CD8-positive, alpha-beta T cell (primary cell): ENCODE measurements at regions of chr4 and their contacts with region 1.

Region 1: GRCh38 chr4:80365928-80366327 is 30.4 kb downstream of the CFAP299 start:
- DNase-seq: peak; percentile 27 to 78 (median 56)
- ATAC-seq: peak; percentile 81
- H3K4me3 ChIP-seq: no peak overlapping the region
- H3K4me3 Mint-ChIP-seq: no peak overlapping the region
- H3K27ac ChIP-seq: no peak overlapping the region
- H3K27ac Mint-ChIP-seq: no peak overlapping the region
- H3K4me1 ChIP-seq: no peaks in the 10 kb centered on the region
- H3K4me1 Mint-ChIP-seq: peaks cover 7% of the 10 kb centered on the region
- H3K27me3 ChIP-seq: no peaks in the 10 kb centered on the region
- H3K27me3 Mint-ChIP-seq: peaks cover 1% of the 10 kb centered on the region
- CTCF ChIP-seq: peak; percentile 75

Region 2: GRCh38 chr4:78951862-78952472 is 1414.0 kb before region 1 on chr4:
- CTCF ChIA-PET with region 1: interaction called, 5 read pairs
- POLR2A ChIA-PET with region 1: no interaction called
- intact Hi-C with region 1: loop called in 1 of 2 experiments (anchors 5 kb)
- DNase-seq: peak in 4 of 9 experiments; percentile 23 to 64 (median 42)
- ATAC-seq: peak; percentile 59
- H3K4me3 ChIP-seq: no peak overlapping the region
- H3K4me3 Mint-ChIP-seq: no peak overlapping the region
- H3K27ac ChIP-seq: no peak overlapping the region
- H3K27ac Mint-ChIP-seq: no peak overlapping the region
- H3K4me1 ChIP-seq: no peaks in the 10 kb centered on the region
- H3K4me1 Mint-ChIP-seq: no peaks in the 10 kb centered on the region
- H3K27me3 ChIP-seq: no peaks in the 10 kb centered on the region
- H3K27me3 Mint-ChIP-seq: peaks cover 13% of the 10 kb centered on the region
- CTCF ChIP-seq: peak; percentile 88

Region 3: GRCh38 chr4:80540785-80541469 is 175.0 kb after region 1 on chr4:
- CTCF ChIA-PET with region 1: interaction called, 6 read pairs
- POLR2A ChIA-PET with region 1: no interaction called
- intact Hi-C with region 1: loop called in 1 of 2 experiments (anchors 5 kb)
- DNase-seq: peak in 2 of 9 experiments; percentile 18 to 39
- ATAC-seq: peak; percentile 48
- H3K4me3 ChIP-seq: no peak overlapping the region
- H3K4me3 Mint-ChIP-seq: no peak overlapping the region
- H3K27ac ChIP-seq: no peak overlapping the region
- H3K27ac Mint-ChIP-seq: no peak overlapping the region
- H3K4me1 ChIP-seq: peaks cover 12% of the 10 kb centered on the region
- H3K4me1 Mint-ChIP-seq: peaks cover 20% of the 10 kb centered on the region
- H3K27me3 ChIP-seq: no peaks in the 10 kb centered on the region
- H3K27me3 Mint-ChIP-seq: peaks cover 2% of the 10 kb centered on the region
- CTCF ChIP-seq: no peak

Region 4: DNA sequence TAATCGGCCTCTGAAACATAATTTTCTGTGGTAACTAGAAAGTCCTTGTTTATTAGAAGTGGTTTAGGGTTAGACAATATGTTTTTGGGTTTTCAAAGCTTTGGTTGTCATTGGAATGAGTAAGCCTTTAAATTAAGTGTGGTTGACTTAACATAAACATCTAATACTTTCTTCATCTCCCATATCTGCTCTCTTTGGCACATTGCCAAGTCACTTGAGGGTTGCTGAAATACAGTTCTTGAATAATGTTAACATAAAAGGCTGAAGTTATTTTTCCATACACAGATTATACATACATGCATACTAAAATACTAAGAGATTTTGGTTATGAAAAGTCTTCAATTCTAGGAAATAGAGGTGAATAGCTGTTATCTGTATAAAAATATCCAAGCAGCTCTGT is 422.9 kb after region 1 on chr4:
- CTCF ChIA-PET with region 1: no interaction called
- POLR2A ChIA-PET with region 1: no interaction called
- intact Hi-C with region 1: loop called in 1 of 2 experiments (anchors 10 kb)
- DNase-seq: peak in 2 of 9 experiments; percentile 7 to 10
- ATAC-seq: no peak
- H3K4me3 ChIP-seq: no peak overlapping the region
- H3K4me3 Mint-ChIP-seq: no peak overlapping the region
- H3K27ac ChIP-seq: no peak overlapping the region
- H3K27ac Mint-ChIP-seq: no peak overlapping the region
- H3K4me1 ChIP-seq: peaks cover 4% of the 10 kb centered on the region
- H3K4me1 Mint-ChIP-seq: peaks cover 9% of the 10 kb centered on the region
- H3K27me3 ChIP-seq: no peaks in the 10 kb centered on the region
- H3K27me3 Mint-ChIP-seq: no peaks in the 10 kb centered on the region
- CTCF ChIP-seq: no peak

Region 5: DNA sequence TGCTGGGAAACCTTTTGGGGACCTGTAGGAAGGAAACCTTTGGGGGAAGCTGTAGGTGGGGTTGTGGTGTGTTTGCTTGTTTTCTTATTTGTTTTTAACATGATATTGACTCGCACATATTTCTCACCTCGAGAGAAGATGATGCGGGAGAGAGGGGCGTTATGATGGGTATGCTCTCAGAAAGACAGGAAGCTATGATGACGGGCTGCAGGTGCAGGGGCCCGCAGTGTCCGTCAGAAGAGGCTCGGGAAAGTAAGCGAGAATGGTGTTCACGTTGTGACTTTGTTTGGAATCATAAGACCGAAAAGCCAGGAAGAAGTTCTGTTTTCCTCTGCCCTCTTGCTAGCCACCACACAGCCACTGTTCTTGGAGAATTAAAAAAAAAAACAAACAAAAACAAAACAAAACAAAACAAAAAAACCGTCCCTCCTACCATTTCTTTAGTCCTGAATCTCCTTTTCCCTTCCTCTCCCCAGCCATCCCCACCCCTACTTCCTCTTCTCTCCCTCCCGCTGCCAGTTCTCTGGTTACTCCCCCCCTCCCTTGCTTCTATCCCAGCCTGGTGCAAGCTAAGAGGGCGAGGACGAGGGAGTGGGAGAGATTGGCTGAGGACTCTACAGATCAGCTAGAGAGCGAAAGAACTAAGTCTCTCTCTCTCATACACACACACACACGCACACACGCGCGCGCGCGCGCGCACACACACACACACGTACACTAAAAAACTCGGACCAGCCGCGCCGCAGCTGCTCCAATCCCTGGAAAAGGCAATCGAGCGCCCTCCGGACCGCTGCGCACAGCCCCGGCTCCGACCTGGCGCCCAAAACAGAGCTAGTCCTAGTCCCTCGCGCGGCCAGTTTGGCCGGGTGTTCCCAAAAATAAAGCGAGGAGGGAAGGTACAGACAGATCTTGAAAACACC is 664.4 kb after region 1 on chr4 and contains the start of gene BMP3:
- CTCF ChIA-PET with region 1: interaction called, 12 read pairs
- POLR2A ChIA-PET with region 1: no interaction called
- intact Hi-C with region 1: no loop called
- DNase-seq: peak in 1 of 9 experiments; percentile 2
- ATAC-seq: no peak
- H3K4me3 ChIP-seq: peak within 1 kb of the TSS in 1 of 2 experiments; percentile 42
- H3K4me3 Mint-ChIP-seq: peak within 1 kb of the TSS; percentile 77
- H3K27ac ChIP-seq: no peak within 1 kb of the TSS
- H3K27ac Mint-ChIP-seq: no peak within 1 kb of the TSS
- H3K4me1 ChIP-seq: peaks cover 15% of the 10 kb centered on the region
- H3K4me1 Mint-ChIP-seq: peaks cover 14% of the 10 kb centered on the region
- H3K27me3 ChIP-seq: peaks cover 20 to 24% of the 10 kb centered on the region in 2 experiments
- H3K27me3 Mint-ChIP-seq: peaks cover 62% of the 10 kb centered on the region
- CTCF ChIP-seq: no peak
- total RNA-seq, gene BMP3: not detected

Region 6: DNA sequence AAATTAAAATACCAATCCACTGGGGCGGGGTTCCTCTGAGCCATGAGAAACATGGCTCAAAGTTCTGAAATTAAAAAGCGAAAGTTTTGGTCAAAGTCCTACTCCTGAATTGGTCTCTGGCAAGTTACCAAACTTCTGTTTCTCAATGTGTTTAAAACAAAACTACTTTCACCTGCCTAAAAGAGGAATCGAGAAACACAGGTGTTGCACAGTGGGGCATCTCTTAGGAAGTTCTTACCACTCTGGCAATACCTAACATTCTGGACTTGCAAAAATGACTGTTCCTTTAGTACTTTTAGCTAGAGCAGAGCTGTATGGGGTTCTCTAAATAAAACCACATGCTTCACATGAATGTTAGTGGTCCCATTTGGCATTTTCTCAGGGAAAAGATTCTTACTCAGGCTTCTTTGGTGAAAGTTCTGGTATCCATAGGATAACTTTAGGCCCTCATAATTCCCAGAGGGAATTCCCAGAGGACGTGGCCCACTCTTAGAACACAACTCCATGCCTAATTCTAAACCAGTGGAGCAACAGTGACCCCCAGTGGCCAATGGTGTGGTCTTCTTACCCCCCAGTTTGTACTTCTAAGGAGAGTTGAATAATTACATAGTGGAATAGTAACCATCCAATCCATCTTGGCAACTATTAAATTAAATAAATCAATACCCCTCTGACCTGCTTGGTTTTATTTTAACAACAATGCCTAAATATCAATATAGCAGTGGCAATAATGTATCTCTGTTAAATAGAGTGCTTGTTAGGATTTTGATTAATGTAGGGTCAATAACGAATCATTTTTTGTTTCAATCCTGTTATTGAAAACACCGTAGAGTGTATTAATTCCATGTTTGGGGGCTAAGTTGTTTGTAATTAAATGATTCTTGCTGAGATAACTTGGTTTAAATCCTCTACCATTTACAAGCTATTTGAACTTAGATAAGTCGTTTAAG is 686.5 kb after region 1 on chr4:
- CTCF ChIA-PET with region 1: interaction called, 10 read pairs
- POLR2A ChIA-PET with region 1: no interaction called
- intact Hi-C with region 1: loop called in 1 of 2 experiments (anchors 1 kb)
- DNase-seq: peak; percentile 14 to 73 (median 48)
- ATAC-seq: peak; percentile 42
- H3K4me3 ChIP-seq: no peak overlapping the region
- H3K4me3 Mint-ChIP-seq: no peak overlapping the region
- H3K27ac ChIP-seq: no peak overlapping the region
- H3K27ac Mint-ChIP-seq: no peak overlapping the region
- H3K4me1 ChIP-seq: no peaks in the 10 kb centered on the region
- H3K4me1 Mint-ChIP-seq: no peaks in the 10 kb centered on the region
- H3K27me3 ChIP-seq: no peaks in the 10 kb centered on the region
- H3K27me3 Mint-ChIP-seq: peaks cover 2% of the 10 kb centered on the region
- CTCF ChIP-seq: peak; percentile 45